Common myeloid progenitor, CD34-positive (primary cell): ENCODE measurements at regions of chr17 and their contacts with region 1.

Region 1: GRCh38 chr17:21275579-21276263 is 8.8 kb upstream of the MAP2K3 start:
- DNase-seq: peak; percentile 83 to 92 (median 92)
- H3K4me3 ChIP-seq: peak overlapping the region; percentile 46 to 80 (median 68)
- H3K27ac ChIP-seq: no peak overlapping the region
- H3K4me1 ChIP-seq: peaks cover 4 to 45% (median 33%) of the 10 kb centered on the region in 4 experiments
- H3K27me3 ChIP-seq: peaks cover 0 to 3% (median 0%) of the 10 kb centered on the region in 5 experiments

Region 2: DNA sequence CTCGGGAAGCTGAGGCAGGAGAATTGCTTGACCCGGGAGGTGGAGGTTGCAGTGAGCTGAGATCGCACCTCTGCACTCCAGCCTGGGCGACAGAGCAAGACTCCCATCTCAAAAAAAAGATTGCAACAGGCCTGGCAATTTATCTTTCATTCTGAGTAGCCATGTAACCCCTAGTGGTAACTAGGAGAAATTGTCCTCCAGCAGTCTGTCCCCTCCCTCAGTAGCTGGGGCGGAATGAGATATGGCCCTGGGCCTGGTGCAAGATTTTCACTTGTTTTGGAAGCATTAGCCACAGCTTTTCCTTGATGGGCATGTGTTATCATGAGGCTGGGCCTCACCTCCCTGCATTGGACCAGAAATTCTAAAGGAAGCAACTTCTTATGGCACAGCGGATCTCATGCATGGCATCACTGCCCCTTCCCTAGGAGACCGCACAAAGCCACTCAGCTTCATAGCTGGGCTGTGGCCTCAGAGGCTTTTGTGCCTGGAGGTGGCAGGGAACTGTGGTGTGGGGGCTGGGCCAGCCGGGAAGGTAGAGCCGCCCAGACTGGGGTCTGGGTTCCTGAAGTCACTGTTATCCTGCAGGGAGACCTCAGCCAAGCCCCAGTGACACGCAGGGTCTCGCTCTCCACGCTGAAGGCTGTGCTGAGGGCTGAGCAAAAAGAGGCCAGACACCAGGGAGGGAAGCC is 35.9 kb before region 1 on chr17:
- CTCF ChIA-PET with region 1: no interaction called
- POLR2A ChIA-PET with region 1: no interaction called
- DNase-seq: peak; percentile 23 to 42 (median 39)
- H3K4me3 ChIP-seq: no peak overlapping the region
- H3K27ac ChIP-seq: no peak overlapping the region
- H3K4me1 ChIP-seq: no peaks in the 10 kb centered on the region
- H3K27me3 ChIP-seq: no peaks in the 10 kb centered on the region

Region 3: DNA sequence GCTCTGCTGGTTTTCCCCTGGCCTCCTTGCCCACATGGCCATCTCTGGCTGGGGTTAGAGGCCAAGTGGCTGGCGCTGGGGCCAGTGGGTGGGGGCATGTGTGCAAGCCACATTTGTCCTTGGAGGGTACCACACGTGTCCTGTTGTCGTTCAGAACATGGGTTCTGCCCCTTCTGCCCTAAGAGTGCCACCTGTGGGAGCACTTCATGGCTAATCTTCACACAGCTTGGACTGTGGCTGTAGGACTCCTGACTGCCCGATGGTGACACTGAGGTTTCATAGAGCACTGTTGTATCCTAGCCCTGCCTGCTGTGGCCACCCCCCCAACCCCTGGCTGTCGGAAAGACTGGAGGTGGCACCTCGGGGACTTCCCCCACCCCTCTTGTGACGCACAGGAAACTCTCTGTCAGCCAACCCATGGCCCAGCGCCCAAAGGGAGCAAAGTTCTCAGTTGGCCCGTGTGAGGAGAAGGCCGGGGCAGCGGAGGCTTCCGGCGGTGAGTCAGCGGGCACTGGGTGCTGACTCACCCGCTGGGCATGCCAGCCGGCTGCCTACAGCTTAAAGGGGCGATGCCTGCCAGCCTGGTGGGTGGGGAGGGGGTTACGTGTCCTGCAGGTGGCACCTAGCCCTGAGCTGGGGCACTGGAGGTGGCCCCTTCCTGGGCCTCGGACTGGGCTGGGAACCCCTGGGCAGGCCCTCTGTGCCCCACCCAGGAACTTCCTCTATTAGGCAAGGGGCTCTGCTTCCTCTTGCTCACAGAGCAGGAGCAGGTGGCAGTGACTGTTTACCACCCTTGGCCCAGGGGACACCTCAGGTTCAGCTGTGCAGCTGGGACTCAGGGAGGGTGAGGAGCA is 12.1 kb after region 1 on chr17:
- CTCF ChIA-PET with region 1: interaction called, 15 read pairs
- POLR2A ChIA-PET with region 1: interaction called, 4 read pairs
- DNase-seq: peak; percentile 99 to 100 (median 99)
- H3K4me3 ChIP-seq: peak overlapping the region in 6 of 7 experiments; percentile 31 to 95 (median 89)
- H3K27ac ChIP-seq: peak overlapping the region; percentile 96 to 97
- H3K4me1 ChIP-seq: peaks cover 10 to 60% (median 58%) of the 10 kb centered on the region in 4 experiments
- H3K27me3 ChIP-seq: no peaks in the 10 kb centered on the region

Region 4: GRCh38 chr17:21295036-21295952 is 19.6 kb after region 1 on chr17:
- CTCF ChIA-PET with region 1: interaction called, 13 read pairs
- POLR2A ChIA-PET with region 1: no interaction called
- DNase-seq: peak; percentile 46 to 87 (median 84)
- H3K4me3 ChIP-seq: no peak overlapping the region
- H3K27ac ChIP-seq: peak overlapping the region; percentile 26 to 60
- H3K4me1 ChIP-seq: peaks cover 0 to 30% (median 19%) of the 10 kb centered on the region in 4 experiments
- H3K27me3 ChIP-seq: no peaks in the 10 kb centered on the region

Region 5: DNA sequence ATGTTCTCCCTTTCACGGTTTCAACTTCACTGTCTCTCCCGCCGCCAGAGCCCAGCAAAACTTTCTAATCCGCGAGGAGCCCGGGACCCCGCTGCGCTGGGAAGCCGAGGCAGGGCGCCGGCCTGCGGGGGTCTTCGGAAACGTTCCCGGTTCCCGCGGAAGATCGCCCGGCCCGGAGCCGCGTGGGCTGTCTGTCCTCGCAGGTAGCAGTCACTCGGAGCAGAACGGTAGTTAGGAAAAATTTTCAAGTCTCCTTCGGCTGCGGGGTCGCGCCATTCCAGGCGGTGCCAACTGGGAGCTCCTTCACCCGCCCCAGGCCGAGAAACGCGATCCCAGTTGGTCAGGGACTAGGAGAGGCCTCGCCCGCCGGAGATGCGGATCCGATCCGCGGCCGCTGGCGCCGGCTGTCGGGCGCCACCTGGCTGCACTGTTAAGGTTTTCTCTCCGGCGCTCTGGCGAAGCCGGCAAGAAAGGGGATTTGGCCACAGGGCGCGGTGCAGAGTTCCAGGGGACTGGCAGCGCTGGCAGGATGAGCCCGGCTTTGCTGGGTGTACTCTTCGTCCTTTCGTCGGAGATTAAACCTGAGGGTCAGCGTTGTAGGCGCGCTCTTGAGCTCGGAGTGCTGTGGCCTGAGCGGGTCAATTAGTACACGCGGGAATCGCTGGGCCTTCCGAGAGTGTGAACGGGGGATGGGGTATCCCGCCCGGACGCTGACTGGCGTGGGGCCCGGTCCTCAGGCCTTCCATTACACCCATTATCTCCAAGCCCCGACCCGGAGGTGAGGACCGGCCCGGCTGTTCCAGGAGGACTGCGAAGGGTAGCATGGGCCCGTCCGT is 235.9 kb after region 1 on chr17:
- CTCF ChIA-PET with region 1: interaction called, 10 read pairs
- POLR2A ChIA-PET with region 1: no interaction called
- DNase-seq: peak; percentile 61 to 76 (median 68)
- H3K4me3 ChIP-seq: peak overlapping the region; percentile 20 to 82 (median 57)
- H3K27ac ChIP-seq: no peak overlapping the region
- H3K4me1 ChIP-seq: peaks cover 0 to 31% (median 13%) of the 10 kb centered on the region in 4 experiments
- H3K27me3 ChIP-seq: peaks cover 0 to 12% (median 0%) of the 10 kb centered on the region in 5 experiments